Heart right ventricle (tissue), 16 donors: ENCODE measurements at regions of chr11 and their contacts with region 1.

Region 1: GRCh38 chr11:2305140-2305840 is 3.5 kb downstream of the TSPAN32 start:
- DNase-seq: peak; percentile 88 to 92
- ATAC-seq: peak; percentile 33 to 73 (median 51)
- H3K4me3 ChIP-seq: peak overlapping the region in 5 of 10 donors; percentile 20 to 34 (median 27)
- H3K27ac ChIP-seq: peak overlapping the region; percentile 8 to 96 (median 90)
- H3K4me1 ChIP-seq: peaks cover 21 to 64% (median 38%) of the 10 kb centered on the region in 9 donors
- H3K27me3 ChIP-seq: no peaks in the 10 kb centered on the region
- CTCF ChIP-seq: peak; percentile 80 to 96 (median 93)

Region 2: DNA sequence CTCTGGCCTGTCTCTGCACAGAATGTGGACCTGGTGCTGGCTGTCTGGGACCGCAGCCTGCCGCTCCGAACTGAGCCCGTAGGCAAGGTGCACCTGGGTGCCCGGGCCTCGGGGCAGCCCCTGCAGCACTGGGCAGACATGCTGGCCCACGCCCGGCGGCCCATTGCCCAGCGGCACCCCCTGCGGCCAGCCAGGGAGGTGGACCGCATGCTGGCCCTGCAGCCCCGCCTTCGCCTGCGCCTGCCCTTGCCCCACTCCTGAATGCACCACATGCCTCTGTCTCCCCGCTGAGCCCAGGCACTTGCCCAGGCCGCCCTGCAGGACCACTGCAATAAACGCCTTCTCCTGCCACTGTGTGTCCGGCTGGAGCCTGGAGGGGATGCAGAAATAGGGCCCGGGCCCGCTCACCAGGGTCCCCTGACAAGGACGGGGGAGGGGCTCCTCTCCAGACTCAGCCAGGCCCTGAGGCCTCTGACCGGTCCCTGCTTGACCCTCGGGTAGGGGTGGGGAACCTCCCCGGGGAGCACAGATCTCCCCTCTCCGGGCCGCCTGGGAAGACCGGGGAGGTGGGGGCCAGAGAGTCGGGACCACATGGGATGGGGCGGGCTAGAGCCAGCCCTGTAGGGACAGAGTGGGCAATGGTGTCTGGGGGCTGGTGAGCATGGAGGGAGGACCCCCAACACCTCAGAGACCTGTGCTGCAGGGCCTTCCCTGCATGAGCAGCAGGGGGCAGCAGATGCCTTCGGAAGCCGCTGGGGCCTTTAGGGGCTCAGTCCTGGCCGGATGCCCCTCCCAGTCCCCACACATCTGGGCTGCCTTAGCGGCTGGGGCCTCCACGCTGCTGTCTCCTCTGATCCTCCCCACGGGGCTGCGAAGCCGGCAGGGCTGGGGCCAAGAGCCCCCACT is 467.9 kb before region 1 on chr11:
- intact Hi-C with region 1: no loop called
- DNase-seq: peak; percentile 71 to 78
- ATAC-seq: peak; percentile 29 to 71 (median 58)
- H3K4me3 ChIP-seq: no peak overlapping the region
- H3K27ac ChIP-seq: peak overlapping the region in 2 of 10 donors; percentile 34 to 60
- H3K4me1 ChIP-seq: peaks cover 6 to 41% (median 25%) of the 10 kb centered on the region in 9 donors
- H3K27me3 ChIP-seq: no peaks in the 10 kb centered on the region
- CTCF ChIP-seq: peak; percentile 89 to 97 (median 92)

Region 3: DNA sequence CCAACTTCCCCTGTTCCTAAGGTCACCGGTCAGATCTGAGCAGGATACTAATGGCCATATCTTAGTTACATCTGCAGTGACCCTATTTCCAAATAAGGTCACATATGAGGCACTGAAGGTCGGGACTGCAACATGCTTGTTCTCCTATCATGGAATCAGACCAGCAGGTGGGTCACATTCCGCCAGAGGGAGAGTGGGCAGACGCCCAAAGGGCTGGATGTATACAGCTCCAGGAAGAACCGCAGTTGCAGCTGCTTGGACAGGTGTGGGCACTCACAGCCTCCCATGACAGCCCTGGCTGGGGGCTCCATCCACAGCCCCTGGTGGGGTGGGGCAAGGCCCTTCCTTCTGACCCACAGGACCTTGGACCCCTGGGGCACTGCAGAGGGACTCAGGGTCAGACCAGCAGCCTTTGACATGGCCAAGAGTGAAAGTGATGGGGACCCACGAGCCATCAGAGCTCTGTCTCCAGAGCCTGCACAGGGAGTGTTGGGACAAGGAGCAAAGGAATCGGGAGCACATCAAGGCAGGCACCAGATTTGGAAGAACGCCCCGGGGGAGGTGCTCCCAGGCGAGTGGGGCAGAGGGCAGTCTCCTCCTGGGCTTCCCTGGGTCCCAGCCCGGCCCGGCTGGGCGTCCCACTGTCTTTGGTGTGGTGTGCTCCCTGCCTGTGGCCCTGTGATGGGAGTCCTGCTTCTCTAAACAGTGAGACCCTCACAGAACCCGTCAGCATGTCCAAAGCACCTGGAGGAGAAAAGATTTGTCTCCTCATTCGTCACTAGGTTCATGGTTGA is 58.5 kb after region 1 on chr11:
- intact Hi-C with region 1: no loop called
- DNase-seq: no peak
- ATAC-seq: no peak
- H3K4me3 ChIP-seq: no peak overlapping the region
- H3K27ac ChIP-seq: no peak overlapping the region
- H3K4me1 ChIP-seq: peaks cover 0 to 30% (median 19%) of the 10 kb centered on the region in 9 donors
- H3K27me3 ChIP-seq: no peaks in the 10 kb centered on the region
- CTCF ChIP-seq: no peak

Region 4: GRCh38 chr11:2377511-2378443 is 72.5 kb after region 1 on chr11:
- intact Hi-C with region 1: loop called in 6 of 10 experiments (anchors 2 to 10 kb)
- DNase-seq: peak; percentile 73 to 78
- ATAC-seq: peak; percentile 22 to 58 (median 46)
- H3K4me3 ChIP-seq: peak overlapping the region; percentile 92 to 100 (median 99)
- H3K27ac ChIP-seq: peak overlapping the region; percentile 97 to 100 (median 99)
- H3K4me1 ChIP-seq: peaks cover 41 to 83% (median 56%) of the 10 kb centered on the region in 9 donors
- H3K27me3 ChIP-seq: no peaks in the 10 kb centered on the region
- CTCF ChIP-seq: no peak

Region 5: GRCh38 chr11:2400069-2400760 is 94.9 kb after region 1 on chr11 and contains the start of gene TSSC4:
- intact Hi-C with region 1: loop called in 6 of 10 experiments (anchors 5 kb)
- DNase-seq: peak; percentile 100
- ATAC-seq: peak; percentile 91 to 96 (median 93)
- H3K4me3 ChIP-seq: peak within 1 kb of the TSS; percentile 72 to 99 (median 92)
- H3K27ac ChIP-seq: peak within 1 kb of the TSS; percentile 96 to 100 (median 98)
- H3K4me1 ChIP-seq: peaks cover 19 to 32% (median 27%) of the 10 kb centered on the region in 9 donors
- H3K27me3 ChIP-seq: no peaks in the 10 kb centered on the region
- CTCF ChIP-seq: peak; percentile 94 to 100 (median 99)
- total RNA-seq, gene TSSC4: 22.0 to 46.4 (median 29.2) TPM

Region 6: GRCh38 chr11:2420502-2421225 is 115.4 kb after region 1 on chr11:
- intact Hi-C with region 1: loop called (anchors 1 to 5 kb)
- DNase-seq: peak; percentile 65 to 83
- ATAC-seq: peak; percentile 89 to 97 (median 94)
- H3K4me3 ChIP-seq: peak overlapping the region in 4 of 10 donors; percentile 3 to 27 (median 12)
- H3K27ac ChIP-seq: no peak overlapping the region
- H3K4me1 ChIP-seq: peaks cover 0 to 15% (median 9%) of the 10 kb centered on the region in 9 donors
- H3K27me3 ChIP-seq: peaks cover 0 to 18% (median 6%) of the 10 kb centered on the region in 7 donors
- CTCF ChIP-seq: peak; percentile 83 to 97 (median 95)

Region 7: DNA sequence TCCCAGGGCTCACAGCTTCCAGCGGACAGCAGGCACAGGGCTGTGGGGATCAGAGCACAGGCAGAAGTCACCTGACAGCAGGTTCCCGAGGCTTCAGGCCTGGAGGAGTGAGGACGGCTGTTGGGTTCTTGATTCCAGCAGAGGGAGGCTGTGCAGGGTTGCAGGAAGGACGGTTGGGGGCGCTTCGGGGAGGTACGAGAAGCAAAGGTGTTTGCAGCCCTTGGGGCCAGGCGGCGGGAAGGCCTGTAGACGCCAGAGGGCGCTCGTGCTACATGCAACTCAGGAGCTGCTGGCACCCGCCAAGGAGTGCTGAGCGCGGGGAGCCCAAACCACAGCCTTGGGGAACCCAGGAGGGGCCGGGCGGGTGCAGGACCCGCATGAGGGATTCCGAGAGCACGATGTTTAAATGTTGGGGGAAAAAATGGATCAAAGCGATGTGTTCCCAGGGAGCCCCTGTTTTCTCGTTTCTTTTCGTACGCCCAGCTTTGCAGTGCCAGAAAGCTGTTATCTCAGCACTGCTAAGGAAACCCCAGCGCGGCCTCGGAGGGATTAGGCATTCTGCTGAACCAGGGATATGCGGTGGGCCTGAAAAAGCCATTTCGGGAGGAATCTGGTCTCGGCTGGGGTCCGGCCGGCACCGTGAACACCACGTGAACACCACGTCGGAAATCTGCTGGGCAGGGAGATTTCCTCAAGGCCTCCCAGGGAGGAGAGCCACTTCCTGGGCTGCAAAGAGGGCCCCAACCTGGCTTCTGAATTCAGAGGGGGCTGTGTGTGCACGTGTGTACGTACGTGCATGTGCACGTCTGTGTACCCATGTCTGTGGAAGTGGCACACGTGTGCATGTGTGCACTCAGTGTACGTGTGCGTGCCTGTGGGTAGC is 227.7 kb after region 1 on chr11:
- intact Hi-C with region 1: loop called in 6 of 10 experiments (anchors 10 kb)
- DNase-seq: peak; percentile 89 to 93
- ATAC-seq: peak; percentile 76 to 95 (median 88)
- H3K4me3 ChIP-seq: peak overlapping the region in 6 of 10 donors; percentile 23 to 48 (median 38)
- H3K27ac ChIP-seq: peak overlapping the region in 9 of 10 donors; percentile 1 to 69 (median 54)
- H3K4me1 ChIP-seq: peaks cover 13 to 28% (median 21%) of the 10 kb centered on the region in 9 donors
- H3K27me3 ChIP-seq: no peaks in the 10 kb centered on the region
- CTCF ChIP-seq: peak; percentile 99 to 100 (median 99)

Region 8: GRCh38 chr11:2586087-2586792 is 280.9 kb after region 1 on chr11:
- intact Hi-C with region 1: no loop called
- DNase-seq: peak in 1 of 2 donors; percentile 8
- ATAC-seq: no peak
- H3K4me3 ChIP-seq: no peak overlapping the region
- H3K27ac ChIP-seq: no peak overlapping the region
- H3K4me1 ChIP-seq: peaks cover 0 to 20% (median 5%) of the 10 kb centered on the region in 9 donors
- H3K27me3 ChIP-seq: no peaks in the 10 kb centered on the region
- CTCF ChIP-seq: no peak

Region 9: DNA sequence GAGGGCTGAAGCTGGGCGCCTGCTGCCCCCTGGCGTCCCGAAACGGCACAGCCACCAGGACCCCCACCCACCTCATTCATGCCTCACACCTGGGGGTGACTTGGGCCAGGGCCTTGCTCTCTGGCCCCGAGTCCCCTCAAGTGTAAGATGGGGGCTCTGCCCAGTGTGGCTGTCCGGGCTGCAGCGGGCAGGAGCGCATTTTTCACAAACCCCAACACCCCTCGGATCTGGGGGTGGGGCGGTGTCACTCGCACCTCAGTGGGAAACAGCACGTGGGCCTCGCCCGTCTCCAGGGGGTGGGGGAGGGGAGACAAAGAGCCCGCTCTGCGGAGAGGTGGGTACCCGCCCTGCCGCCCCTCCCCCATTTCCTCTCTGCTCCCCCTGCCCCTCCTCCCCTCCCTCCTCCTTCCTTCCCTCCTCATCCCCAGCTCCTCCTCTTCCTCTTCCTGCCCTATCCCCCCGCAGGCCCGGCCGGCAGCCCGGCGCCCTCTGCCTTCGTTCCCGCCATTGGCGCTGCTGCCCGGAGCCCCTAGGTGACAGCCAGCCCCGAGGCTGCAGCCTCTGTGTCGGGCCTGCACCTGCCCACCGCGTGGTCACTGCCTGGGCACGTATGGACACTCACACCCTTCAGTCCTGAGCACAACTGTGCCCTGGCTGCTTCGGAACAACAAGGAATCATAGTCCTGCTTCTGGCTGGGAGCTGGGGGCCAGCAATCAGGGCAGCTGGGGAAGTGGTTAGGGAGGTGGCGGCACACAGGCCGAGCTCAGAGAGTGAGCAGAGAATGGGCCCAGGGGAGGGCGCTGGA is 587.1 kb after region 1 on chr11:
- intact Hi-C with region 1: loop called in 5 of 10 experiments (anchors 5 to 10 kb)
- DNase-seq: peak; percentile 57 to 83
- ATAC-seq: peak; percentile 24 to 78 (median 64)
- H3K4me3 ChIP-seq: peak overlapping the region in 9 of 10 donors; percentile 41 to 63 (median 58)
- H3K27ac ChIP-seq: peak overlapping the region in 9 of 10 donors; percentile 25 to 89 (median 71)
- H3K4me1 ChIP-seq: peaks cover 6 to 42% (median 35%) of the 10 kb centered on the region in 9 donors
- H3K27me3 ChIP-seq: no peaks in the 10 kb centered on the region
- CTCF ChIP-seq: peak; percentile 91 to 97 (median 93)